Uterus (tissue), 4 donors: ENCODE measurements at regions of chr4 and their contacts with region 1.

Region 1: DNA sequence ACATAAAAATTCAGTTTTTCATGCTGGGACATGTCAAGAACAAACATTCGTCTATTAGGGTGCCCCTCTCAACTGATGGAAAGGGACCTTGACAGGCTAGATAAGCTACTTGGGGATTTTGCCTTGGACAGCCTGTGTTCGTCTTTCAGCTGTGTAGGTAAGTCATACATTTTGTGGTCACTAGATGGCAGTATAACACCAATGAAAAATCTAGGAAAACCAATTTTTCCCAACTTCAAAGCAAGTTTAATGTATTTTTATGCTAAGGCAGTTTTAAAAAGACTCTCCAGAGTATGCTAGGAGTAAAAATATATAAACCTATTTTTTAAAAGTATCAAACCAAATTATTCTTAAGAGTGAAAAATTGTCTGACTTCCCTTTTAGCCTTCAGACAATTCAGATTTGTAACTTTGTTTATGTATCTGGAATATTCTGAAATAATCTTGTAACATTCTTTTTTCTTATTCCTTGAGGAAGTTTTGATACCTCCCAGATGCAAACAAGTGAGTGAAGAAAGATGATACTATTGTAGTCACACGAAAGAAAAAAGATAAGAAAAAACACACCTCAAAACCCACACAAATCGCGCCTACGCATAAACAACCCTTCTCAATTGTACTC is 158.3 kb downstream of the CPE start:
- DNase-seq: no peak
- H3K4me3 ChIP-seq: no peak overlapping the region
- H3K27ac ChIP-seq: no peak overlapping the region
- H3K4me1 ChIP-seq: no peaks in the 10 kb centered on the region
- H3K27me3 ChIP-seq: no peaks in the 10 kb centered on the region
- CTCF ChIP-seq: peak; percentile 59 to 72 (median 70)
- POLR2A ChIP-seq: no peak

Region 2: DNA sequence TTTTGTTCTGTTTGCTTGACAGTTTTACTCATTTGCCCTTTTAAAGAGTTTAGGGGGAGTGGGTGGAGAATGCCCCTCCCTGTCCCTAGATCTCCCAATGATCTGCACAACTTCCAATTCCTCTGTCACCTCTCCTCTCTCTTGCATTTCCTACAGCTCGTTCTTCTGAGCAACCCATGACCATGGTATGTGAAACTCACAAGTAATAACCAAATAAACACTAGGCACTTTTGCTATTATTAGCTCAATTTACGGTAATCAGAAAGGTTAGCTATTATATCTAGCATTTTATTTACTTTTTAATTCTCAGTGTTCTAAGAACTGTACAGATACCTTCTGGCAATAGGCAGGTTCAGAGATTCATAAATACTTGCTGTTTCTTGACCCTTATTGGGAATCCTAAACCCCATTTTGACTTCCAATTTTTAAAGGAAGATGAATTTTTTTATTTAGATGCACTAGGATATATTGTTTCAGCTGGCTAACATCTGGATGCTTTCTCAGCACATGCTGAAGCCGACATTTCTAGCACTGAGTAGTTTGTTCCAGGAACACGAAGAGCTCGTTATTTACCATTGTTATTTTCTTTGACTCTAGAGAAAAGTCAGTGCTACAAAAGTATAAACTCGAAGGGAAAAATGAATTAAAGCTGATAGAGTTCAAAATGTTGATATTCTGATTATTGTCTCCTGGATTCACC is 141.2 kb after region 1 on chr4:
- intact Hi-C with region 1: no loop called
- DNase-seq: no peak
- H3K4me3 ChIP-seq: no peak overlapping the region
- H3K27ac ChIP-seq: no peak overlapping the region
- H3K4me1 ChIP-seq: no peaks in the 10 kb centered on the region
- H3K27me3 ChIP-seq: no peaks in the 10 kb centered on the region
- CTCF ChIP-seq: no peak
- POLR2A ChIP-seq: no peak

Region 3: GRCh38 chr4:166045457-166045856 is 508.3 kb after region 1 on chr4:
- intact Hi-C with region 1: no loop called
- DNase-seq: no peak
- H3K4me3 ChIP-seq: no peak overlapping the region
- H3K27ac ChIP-seq: no peak overlapping the region
- H3K4me1 ChIP-seq: no peaks in the 10 kb centered on the region
- H3K27me3 ChIP-seq: no peaks in the 10 kb centered on the region
- CTCF ChIP-seq: no peak
- POLR2A ChIP-seq: no peak

Region 4: DNA sequence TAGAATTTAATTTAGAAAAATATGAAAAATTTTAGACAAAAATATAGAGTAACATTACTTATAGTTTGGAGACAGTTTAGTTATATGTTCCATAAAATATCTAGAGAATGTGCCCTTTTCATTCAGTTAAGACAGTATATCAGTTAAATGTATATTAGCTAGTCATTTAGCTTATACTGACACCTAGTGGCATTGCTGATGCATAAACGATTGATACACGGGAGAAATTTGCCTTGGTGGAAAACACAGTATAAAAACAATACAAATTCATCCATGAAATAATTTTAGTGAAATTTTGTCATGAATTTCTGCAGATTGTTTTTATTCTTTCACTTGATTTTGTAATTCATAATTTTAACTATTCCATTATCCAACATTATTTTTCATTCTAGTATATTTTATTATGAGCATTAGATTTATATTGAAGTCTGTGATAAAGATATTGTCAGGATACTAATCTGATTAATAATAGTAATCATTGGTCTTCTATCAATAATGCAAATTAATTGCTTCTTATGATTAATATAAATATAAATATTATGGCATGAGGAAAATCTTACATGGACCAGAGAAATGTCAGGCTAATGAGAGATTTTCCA is 554.9 kb after region 1 on chr4:
- intact Hi-C with region 1: loop called (anchors 5 kb)
- DNase-seq: no peak
- H3K4me3 ChIP-seq: no peak overlapping the region
- H3K27ac ChIP-seq: no peak overlapping the region
- H3K4me1 ChIP-seq: no peaks in the 10 kb centered on the region
- H3K27me3 ChIP-seq: no peaks in the 10 kb centered on the region
- CTCF ChIP-seq: peak; percentile 39 to 64 (median 62)
- POLR2A ChIP-seq: no peak

Region 5: GRCh38 chr4:166400270-166400894 is 863.2 kb after region 1 on chr4:
- intact Hi-C with region 1: no loop called
- DNase-seq: no peak
- H3K4me3 ChIP-seq: no peak overlapping the region
- H3K27ac ChIP-seq: no peak overlapping the region
- H3K4me1 ChIP-seq: no peaks in the 10 kb centered on the region
- H3K27me3 ChIP-seq: no peaks in the 10 kb centered on the region
- CTCF ChIP-seq: no peak
- POLR2A ChIP-seq: no peak